ENCODE measurements at regions of chr5 and their contacts with region 1.

Region 1: DNA sequence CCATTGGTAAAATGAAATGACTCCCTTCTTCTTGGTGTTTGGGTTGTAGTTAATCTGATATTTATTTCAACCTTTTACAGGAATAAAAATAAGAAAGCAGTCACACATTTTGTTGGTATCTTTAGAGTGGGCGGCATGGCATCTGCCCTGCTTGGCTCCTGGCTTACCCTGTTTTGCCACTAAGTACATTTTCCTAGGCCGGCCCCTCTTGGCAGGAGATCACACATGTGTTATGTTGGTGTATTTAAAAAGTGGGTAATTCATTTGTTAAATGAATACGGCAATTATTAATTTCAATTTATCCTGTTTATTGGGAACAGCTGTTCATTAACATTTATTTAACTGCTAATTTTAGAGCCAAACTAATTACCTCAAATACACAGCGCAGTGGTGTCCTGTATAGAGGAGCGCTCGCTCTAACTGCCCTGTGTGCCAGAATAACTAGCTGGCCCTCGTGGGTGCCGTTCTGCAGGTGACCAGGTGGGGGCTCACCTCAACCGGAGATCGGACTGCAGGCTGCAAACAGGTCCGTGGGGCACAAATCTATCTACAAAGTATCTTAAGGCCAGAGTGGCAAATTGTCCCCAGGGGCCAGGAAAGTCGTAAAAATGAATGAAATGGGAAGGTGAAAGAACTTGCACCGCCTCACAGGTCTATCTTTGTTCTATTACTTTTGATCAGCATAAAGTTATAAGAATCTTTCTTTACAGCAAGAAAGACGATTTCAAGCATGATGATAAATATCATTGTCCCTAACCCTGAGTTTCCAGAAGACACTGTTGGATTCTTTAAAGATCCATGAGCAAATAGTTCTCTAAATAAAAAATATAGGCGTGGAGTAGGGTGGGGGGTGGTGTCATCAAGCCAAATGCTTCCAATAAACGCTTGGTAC is 26.2 kb upstream of the GPR151 start:
- DNase-seq: peak; percentile 70 to 75 (median 75)
- ATAC-seq: peak; percentile 99
- H3K4me3 ChIP-seq: no peak overlapping the region
- H3K27ac ChIP-seq: no peak overlapping the region
- H3K4me1 ChIP-seq: no peaks in the 10 kb centered on the region
- H3K27me3 ChIP-seq: peaks cover 0 to 13% of the 10 kb centered on the region in 2 experiments; a peak in 2 of 5 replicates
- CTCF ChIP-seq: peak; percentile 83 to 92 (median 85)
- EP300 ChIP-seq: no peak
- POLR2A ChIP-seq: no peak
- RAD21 ChIP-seq: peak; percentile 77 to 83

Region 2: GRCh38 chr5:146959360-146959759 is 417.2 kb after region 1 on chr5:
- CTCF ChIA-PET with region 1: no interaction called
- POLR2A ChIA-PET with region 1: no interaction called
- in situ Hi-C with region 1: loop called (anchors 5 kb)
- intact Hi-C with region 1: no loop called
- DNase-seq: no peak
- ATAC-seq: no peak
- H3K4me3 ChIP-seq: no peak overlapping the region
- H3K27ac ChIP-seq: no peak overlapping the region
- H3K4me1 ChIP-seq: no peaks in the 10 kb centered on the region
- H3K27me3 ChIP-seq: no peaks in the 10 kb centered on the region
- CTCF ChIP-seq: no peak
- EP300 ChIP-seq: no peak
- POLR2A ChIP-seq: no peak
- RAD21 ChIP-seq: no peak

Region 3: DNA sequence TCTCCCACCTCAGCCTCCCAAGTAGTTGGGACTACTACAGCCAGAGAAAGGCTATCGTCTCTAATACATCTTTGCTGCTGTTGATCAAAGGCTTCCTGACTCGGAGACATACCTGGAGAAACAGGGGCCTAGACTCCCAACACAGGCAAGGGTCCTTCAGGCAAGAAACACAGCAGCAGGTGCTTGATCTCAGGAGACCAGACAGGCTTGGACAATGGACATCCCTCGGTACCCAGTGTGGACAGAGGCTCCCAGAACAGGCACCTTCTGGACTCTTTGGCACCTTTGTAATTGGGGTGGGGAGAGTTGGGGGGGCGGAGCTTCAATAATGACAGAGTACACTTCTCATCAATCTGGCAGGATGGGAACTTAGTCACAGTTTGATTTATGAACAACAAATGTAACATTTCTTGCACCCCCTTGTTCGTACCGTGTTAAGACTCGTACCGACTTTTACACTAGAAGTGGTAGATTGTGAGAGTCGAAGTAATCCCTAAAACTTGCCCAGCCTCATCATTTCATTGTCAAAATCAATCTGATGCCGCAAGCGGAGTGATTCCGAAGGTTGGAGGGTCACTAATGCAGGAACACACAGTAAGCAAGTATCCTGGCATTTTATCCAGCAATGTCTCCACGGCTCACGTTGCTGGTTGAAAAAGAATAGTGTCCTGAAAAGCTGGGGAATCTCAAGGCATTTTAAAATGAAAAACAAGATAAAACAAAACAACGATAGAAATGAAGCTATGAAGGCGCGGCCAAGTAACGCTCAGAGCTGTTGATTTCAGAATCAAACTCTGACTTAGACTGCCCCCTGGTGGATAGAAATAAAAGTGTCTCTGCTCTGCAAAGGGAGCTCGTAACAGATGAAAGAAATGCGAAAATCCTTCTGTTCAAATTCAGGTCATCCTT is 646.2 kb after region 1 on chr5:
- CTCF ChIA-PET with region 1: interaction called, 7 read pairs
- POLR2A ChIA-PET with region 1: no interaction called
- in situ Hi-C with region 1: loop called (anchors 5 kb)
- intact Hi-C with region 1: loop called (anchors 1 kb)
- DNase-seq: peak; percentile 53 to 75 (median 63)
- ATAC-seq: peak; percentile 86
- H3K4me3 ChIP-seq: no peak overlapping the region
- H3K27ac ChIP-seq: no peak overlapping the region
- H3K4me1 ChIP-seq: no peaks in the 10 kb centered on the region
- H3K27me3 ChIP-seq: no peaks in the 10 kb centered on the region
- CTCF ChIP-seq: peak; percentile 47 to 70 (median 69)
- EP300 ChIP-seq: no peak
- POLR2A ChIP-seq: no peak
- RAD21 ChIP-seq: peak; percentile 55 to 76

Region 4: DNA sequence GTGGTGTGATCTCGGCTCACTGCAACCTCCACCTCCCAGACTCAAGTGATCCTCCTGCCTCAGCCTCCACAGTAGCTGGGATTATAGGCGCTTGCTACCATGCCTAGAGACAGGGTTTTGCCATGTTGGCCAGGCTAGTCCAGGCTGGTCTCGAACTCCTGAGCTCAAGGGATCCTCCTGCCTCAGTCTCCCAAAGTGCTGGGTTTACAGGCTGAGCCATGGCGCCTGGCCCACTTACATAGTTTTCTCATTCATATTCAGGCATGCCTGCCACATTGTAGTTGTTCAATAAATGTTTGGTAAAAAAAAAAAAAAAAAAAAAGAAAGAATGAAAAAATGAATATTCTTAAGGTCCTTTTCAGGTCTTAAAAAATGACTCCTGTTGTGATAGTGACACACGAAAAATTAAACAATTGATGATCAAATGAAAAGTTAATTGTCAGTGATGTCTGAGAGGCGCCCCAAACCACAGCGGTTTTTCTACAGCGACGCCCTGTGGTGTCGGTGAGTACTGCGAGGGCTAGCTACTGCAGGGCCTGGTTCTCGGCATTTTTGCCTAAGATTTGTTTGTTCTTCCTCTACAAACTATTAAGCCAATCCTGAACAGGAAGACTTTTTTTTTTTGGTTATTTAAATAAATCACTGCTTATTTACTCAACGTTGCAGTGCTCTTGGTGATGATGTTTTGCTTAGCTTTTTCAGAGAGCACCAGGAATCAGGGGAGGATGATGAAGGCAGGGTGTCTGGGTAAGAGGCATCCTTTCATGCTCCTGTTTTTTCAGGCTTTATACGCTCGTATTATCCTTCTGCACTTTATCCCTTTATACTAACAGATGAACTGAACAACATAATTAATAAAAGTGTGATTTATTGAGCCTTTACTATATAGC is 1034.7 kb after region 1 on chr5:
- CTCF ChIA-PET with region 1: no interaction called
- POLR2A ChIA-PET with region 1: no interaction called
- in situ Hi-C with region 1: no loop called
- intact Hi-C with region 1: loop called (anchors 5 kb)
- DNase-seq: peak; percentile 8 to 36 (median 26)
- ATAC-seq: peak; percentile 72
- H3K4me3 ChIP-seq: no peak overlapping the region
- H3K27ac ChIP-seq: no peak overlapping the region
- H3K4me1 ChIP-seq: no peaks in the 10 kb centered on the region
- H3K27me3 ChIP-seq: no peaks in the 10 kb centered on the region
- CTCF ChIP-seq: peak; percentile 42 to 62 (median 45)
- EP300 ChIP-seq: no peak
- POLR2A ChIP-seq: no peak
- RAD21 ChIP-seq: peak in 1 of 2 experiments; percentile 30; a peak in 2 of 4 replicates